Activated T-helper 1 cell treated with anti-CD3 and anti-CD28 coated beads, Interleukin-12 subunit alpha, Interleukin-12 subunit beta, Interleukin-2, Interleukin-4 antibody, amounts not matched to agents 30 ng/mL and 10 ng/mL and 1 ng/mL, durations not matched to agents 14 hours and 24 hours and 36 hours (primary cell): ENCODE measurements at regions of chr3 and their contacts with region 1.

Region 1: GRCh38 chr3:51498876-51499738 is 708 bp downstream of the DCAF1 start:
- DNase-seq: peak; percentile 85
- H3K4me3 Mint-ChIP-seq: peak overlapping the region; percentile 88
- H3K27ac Mint-ChIP-seq: peak overlapping the region; percentile 95
- H3K4me1 Mint-ChIP-seq: peaks cover 21% of the 10 kb centered on the region
- H3K27me3 Mint-ChIP-seq: peaks cover 3% of the 10 kb centered on the region

Region 2: DNA sequence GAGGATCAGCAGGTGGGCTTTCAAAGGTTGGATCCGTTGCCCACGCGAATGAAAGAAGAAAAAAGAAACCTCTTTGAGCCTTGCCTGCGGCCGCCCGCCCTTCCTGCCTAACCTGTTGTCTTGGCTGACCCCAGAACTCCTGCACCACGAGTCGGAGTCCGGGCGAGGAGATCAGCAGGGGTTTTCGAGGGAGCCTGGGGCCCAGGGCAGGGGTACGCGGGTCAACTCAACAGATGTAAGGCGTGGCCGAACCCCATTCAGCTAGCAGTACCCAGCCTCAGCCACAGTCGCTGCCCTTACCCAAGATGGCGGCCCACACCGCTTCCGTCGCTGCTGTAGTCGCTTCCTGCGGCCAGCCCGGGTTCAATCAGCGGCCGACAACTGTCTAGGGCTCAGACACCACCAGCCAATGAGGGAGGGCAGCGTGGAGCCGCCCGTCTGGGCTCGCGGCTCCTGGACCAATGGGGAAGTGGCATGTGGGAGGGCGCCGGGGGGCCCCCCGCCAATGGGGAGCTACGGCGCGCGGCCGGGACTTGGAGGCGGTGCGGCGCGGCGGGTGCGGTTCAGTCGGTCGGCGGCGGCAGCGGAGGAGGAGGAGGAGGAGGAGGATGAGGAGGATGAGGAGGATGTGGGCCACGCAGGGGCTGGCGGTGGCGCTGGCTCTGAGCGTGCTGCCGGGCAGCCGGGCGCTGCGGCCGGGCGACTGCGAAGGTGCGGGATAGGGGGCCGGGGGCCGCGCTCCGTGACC is 114.2 kb before region 1 on chr3 and contains the start of gene MANF:
- intact Hi-C with region 1: loop called (anchors 1 kb)
- DNase-seq: peak; percentile 98
- H3K4me3 Mint-ChIP-seq: peak within 1 kb of the TSS; percentile 99
- H3K27ac Mint-ChIP-seq: peak within 1 kb of the TSS; percentile 98
- H3K4me1 Mint-ChIP-seq: peaks cover 54% of the 10 kb centered on the region
- H3K27me3 Mint-ChIP-seq: no peaks in the 10 kb centered on the region
- total RNA-seq, gene MANF: 200 and 208 TPM in 2 replicates

Region 3: DNA sequence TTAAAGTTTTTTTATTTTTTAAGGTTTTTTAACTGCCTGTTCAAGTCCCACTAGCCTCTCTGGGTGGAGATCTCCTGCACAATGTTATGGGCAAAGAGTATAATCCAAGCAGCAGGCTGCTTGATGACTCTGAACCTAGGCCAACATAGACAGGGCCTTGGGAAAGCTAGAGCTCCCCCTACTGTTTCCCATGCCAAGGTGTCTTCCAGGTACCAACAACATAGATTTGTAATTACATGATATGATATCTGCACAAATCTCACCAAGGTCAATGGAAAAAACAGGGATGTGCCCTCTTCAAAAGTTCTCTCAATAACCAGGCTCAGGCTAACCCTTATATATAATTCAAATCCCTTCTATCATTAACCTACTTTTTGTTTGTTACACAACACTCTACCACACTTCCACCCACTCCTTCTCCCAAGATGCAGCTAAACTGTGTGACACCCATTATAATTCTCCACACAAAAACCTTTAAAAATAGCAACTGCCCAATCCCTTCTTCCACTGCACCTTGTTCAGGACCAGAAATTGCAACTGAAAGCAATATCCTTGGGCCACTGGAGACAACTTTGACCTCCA is 64.3 kb before region 1 on chr3:
- intact Hi-C with region 1: no loop called
- DNase-seq: peak; percentile 34
- H3K4me3 Mint-ChIP-seq: no peak overlapping the region
- H3K27ac Mint-ChIP-seq: no peak overlapping the region
- H3K4me1 Mint-ChIP-seq: peaks cover 10% of the 10 kb centered on the region
- H3K27me3 Mint-ChIP-seq: no peaks in the 10 kb centered on the region

Region 4: GRCh38 chr3:51538459-51539290 is 39.6 kb after region 1 on chr3 and contains the start of gene RAD54L2:
- intact Hi-C with region 1: loop called (anchors 1 kb)
- DNase-seq: peak; percentile 71
- H3K4me3 Mint-ChIP-seq: peak within 1 kb of the TSS; percentile 93
- H3K27ac Mint-ChIP-seq: peak within 1 kb of the TSS; percentile 90
- H3K4me1 Mint-ChIP-seq: peaks cover 32% of the 10 kb centered on the region
- H3K27me3 Mint-ChIP-seq: no peaks in the 10 kb centered on the region
- total RNA-seq, gene RAD54L2: 43.2 and 46.5 TPM in 2 replicates

Region 5: DNA sequence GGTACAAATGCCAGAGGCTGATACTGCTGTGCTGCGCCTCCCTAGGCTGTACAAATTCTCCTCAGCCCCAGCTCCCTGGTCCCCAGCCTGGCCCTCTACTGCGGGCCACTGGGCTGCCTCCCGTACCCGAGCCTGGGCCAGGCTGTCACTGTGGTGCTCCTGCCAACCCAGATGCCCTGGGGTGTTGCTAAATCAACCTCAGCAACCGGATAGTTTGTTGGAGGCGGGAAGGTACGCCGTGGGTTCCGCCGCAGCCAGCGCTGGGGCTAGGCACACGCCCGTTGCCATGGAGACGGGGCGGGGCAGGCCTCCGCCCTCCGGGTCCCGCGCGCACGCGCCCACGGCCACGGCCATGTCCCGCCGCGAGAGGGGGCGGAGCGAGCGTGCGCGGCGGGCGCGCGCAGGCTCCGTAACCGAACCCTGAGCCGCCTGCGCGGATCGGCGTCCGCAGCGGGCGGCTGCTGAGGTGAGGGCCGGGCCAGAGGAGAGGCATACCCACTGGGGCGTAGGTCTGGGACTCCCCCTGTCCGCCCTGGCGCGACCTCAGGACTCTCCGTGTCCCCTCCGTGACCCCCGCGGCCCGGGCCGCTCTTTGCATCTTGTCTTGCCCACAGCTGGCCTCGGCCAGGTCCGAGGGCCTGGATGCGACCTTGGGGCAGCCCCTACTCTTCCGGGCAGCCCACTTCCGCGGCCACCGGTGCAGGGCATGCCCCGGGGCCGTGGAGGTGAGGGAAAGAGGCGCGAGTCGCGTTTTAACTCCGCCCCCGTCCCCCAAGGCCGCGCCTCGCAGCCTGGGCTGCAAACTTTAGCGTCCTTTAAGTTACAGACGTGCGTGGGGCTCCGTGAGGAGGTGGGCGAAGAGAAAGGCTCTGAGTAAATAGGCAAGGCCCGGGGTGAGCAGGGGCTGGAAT is 172.0 kb after region 1 on chr3 and contains the start of gene TEX264:
- intact Hi-C with region 1: loop called (anchors 1 kb)
- DNase-seq: peak; percentile 95
- H3K4me3 Mint-ChIP-seq: peak within 1 kb of the TSS; percentile 86
- H3K27ac Mint-ChIP-seq: peak within 1 kb of the TSS; percentile 87
- H3K4me1 Mint-ChIP-seq: peaks cover 65% of the 10 kb centered on the region
- H3K27me3 Mint-ChIP-seq: no peaks in the 10 kb centered on the region
- total RNA-seq, gene TEX264: 50.3 and 52.0 TPM in 2 replicates

Region 6: GRCh38 chr3:51799879-51800749 is 301.0 kb after region 1 on chr3:
- intact Hi-C with region 1: loop called (anchors 1 kb)
- DNase-seq: peak; percentile 14
- H3K4me3 Mint-ChIP-seq: no peak overlapping the region
- H3K27ac Mint-ChIP-seq: peak overlapping the region; percentile 16
- H3K4me1 Mint-ChIP-seq: peaks cover 50% of the 10 kb centered on the region
- H3K27me3 Mint-ChIP-seq: peaks cover 4% of the 10 kb centered on the region